ENCODE measurements at regions of chr5 and their contacts with region 1.

Region 1: DNA sequence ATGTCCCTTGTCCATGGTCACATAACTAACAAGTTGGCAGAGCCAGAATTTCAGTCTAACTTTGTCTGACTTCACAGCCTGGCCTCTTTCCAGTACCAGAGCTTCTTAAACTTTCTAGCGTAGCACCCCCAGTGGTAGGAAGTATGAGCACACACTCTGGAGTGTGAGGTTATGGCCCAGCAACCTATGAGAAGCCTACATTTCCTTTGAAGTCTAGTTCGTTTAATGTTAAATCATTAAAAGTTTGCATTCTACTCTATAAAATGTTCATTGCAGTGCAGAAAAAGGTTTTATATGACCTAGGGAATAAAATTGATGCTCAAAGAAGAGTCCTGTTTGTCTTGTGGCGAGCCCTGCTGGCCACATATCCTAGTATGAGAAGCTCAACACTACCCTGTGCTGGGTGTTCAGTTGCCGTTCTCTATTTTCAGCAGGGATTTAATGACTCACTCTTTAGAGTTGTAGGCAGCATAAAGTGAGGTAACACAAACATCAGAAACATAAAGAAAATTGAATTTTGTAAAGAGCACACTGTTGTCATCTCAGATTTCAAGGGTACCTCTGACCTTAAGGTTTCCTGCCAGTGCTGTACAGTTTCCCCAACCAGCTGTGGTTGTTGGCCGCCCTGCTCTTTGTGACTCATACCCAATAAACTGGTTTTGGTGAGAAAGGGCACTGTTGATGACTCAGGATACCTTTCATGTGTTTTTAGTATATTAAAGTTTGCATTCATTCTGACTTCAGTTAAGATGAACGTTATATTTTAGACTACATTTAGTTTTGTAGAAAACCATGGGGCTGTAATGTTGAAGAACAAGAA is 14.3 kb downstream of the MCCC2 start:
- DNase-seq: peak; percentile 80
- H3K4me3 Mint-ChIP-seq: peak overlapping the region; percentile 26
- H3K27ac Mint-ChIP-seq: peak overlapping the region; percentile 85
- H3K4me1 Mint-ChIP-seq: peaks cover 15% of the 10 kb centered on the region
- H3K27me3 Mint-ChIP-seq: no peaks in the 10 kb centered on the region
- CTCF ChIP-seq: peak; percentile 58

Region 2: DNA sequence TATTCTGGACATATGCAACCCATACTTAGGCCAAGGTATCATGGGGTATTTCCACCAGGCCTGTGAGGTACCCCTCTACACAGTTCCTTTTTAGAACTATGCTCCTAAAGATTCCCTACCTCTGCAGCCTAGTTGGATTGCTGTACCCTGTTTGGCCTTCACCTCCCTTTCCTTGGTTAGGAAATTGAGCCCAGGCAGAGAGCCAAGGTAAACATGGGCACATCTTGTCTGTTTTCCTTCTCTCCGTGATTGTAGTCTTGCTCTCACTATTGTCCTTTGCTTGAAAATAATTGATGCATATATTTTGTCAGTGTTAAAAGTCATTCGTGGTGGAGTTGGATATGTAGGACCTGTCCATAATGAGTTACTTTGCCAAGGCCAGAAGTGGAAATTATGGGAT is 119.3 kb before region 1 on chr5:
- CTCF ChIA-PET with region 1: no interaction called
- intact Hi-C with region 1: no loop called
- DNase-seq: peak; percentile 40
- H3K4me3 Mint-ChIP-seq: no peak overlapping the region
- H3K27ac Mint-ChIP-seq: peak overlapping the region; percentile 13
- H3K4me1 Mint-ChIP-seq: peaks cover 30% of the 10 kb centered on the region
- H3K27me3 Mint-ChIP-seq: no peaks in the 10 kb centered on the region
- CTCF ChIP-seq: no peak

Region 3: DNA sequence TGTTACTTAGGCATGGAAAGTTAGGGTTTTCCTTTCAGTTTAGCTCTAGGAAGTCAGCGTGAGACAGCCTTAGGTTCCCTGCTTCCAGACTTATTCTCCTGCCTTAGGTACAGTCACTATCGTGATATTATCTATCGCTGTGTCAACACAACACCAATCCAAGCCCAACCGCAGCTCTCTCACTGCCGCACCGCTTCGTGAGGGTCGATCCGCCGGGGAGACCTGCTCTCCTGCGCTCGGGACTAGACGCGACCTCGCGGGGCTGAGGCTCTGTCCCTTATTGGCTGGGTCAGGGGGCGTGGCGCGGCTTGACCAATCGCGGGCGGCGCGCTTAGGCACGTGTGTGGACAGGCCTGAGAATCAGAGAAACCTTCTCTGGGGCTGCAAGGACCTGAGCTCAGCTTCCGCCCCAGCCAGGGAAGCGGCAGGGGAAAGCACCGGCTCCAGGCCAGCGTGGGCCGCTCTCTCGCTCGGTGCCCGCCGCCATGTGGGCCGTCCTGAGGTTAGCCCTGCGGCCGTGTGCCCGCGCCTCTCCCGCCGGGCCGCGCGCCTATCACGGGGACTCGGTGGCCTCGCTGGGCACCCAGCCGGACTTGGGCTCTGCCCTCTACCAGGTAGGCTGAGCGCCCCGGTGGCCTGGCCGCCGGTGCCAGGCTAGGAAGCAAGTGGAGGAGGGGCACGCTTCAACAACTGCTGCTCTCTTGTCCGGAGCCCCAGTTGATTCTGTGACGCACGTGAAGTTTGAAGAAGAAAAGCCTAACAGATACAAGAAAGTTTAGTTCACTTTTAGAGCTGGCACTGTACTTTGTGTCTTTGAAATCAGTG is 14.3 kb before region 1 on chr5 and contains the start of gene MCCC2:
- CTCF ChIA-PET with region 1: interaction called, 19 read pairs
- intact Hi-C with region 1: no loop called
- DNase-seq: peak; percentile 98
- H3K4me3 Mint-ChIP-seq: peak within 1 kb of the TSS; percentile 88
- H3K27ac Mint-ChIP-seq: peak within 1 kb of the TSS; percentile 98
- H3K4me1 Mint-ChIP-seq: peaks cover 21% of the 10 kb centered on the region
- H3K27me3 Mint-ChIP-seq: no peaks in the 10 kb centered on the region
- CTCF ChIP-seq: no peak
- total RNA-seq, gene MCCC2: 98.7 and 115 TPM in 2 replicates

Region 4: DNA sequence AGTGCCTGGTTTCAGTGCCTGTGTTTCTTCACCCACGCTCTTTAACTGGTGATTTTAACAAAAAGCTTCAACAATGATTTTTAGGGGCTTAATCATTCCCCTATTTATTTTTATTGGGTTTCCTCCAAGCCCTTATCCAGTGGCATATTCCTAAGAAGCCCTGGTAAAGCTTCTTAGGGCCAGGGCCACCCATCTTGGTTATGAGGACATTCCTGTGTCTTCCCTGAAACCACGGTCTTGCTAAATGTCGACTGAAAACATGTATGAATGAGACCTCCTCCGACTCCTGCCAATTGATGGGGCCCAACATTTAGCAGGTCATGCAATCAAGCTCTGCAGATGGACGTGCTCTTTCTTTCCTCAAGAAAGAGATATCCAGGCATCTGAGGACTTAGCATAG is 104.0 kb after region 1 on chr5:
- CTCF ChIA-PET with region 1: no interaction called
- intact Hi-C with region 1: no loop called
- DNase-seq: no peak
- H3K4me3 Mint-ChIP-seq: no peak overlapping the region
- H3K27ac Mint-ChIP-seq: no peak overlapping the region
- H3K4me1 Mint-ChIP-seq: peaks cover 12% of the 10 kb centered on the region
- H3K27me3 Mint-ChIP-seq: no peaks in the 10 kb centered on the region
- CTCF ChIP-seq: no peak

Measured in Calu3 (cell line).